ENCODE measurements at regions of chr10 and their contacts with region 1.

Region 1: GRCh38 chr10:73879296-73880173 is 5.2 kb upstream of the CAMK2G start:
- DNase-seq: peak; percentile 97
- ATAC-seq: peak; percentile 93
- H3K4me3 Mint-ChIP-seq: no peak overlapping the region
- H3K27ac Mint-ChIP-seq: peak overlapping the region; percentile 61
- H3K4me1 Mint-ChIP-seq: peaks cover 53% of the 10 kb centered on the region
- H3K27me3 Mint-ChIP-seq: peaks cover 6% of the 10 kb centered on the region

Region 2: GRCh38 chr10:73810735-73811465 is 68.6 kb before region 1 on chr10:
- CTCF ChIA-PET with region 1: interaction called, 22 read pairs
- POLR2A ChIA-PET with region 1: interaction called, 3 read pairs
- DNase-seq: peak; percentile 71
- ATAC-seq: peak; percentile 37
- H3K4me3 Mint-ChIP-seq: peak overlapping the region; percentile 92
- H3K27ac Mint-ChIP-seq: peak overlapping the region; percentile 93
- H3K4me1 Mint-ChIP-seq: peaks cover 48% of the 10 kb centered on the region
- H3K27me3 Mint-ChIP-seq: no peaks in the 10 kb centered on the region

Region 3: GRCh38 chr10:73848821-73849489 is 30.6 kb before region 1 on chr10:
- CTCF ChIA-PET with region 1: interaction called, 431 read pairs
- POLR2A ChIA-PET with region 1: interaction called, 14 read pairs
- DNase-seq: peak; percentile 96
- ATAC-seq: peak; percentile 99
- H3K4me3 Mint-ChIP-seq: peak overlapping the region; percentile 22
- H3K27ac Mint-ChIP-seq: peak overlapping the region; percentile 55
- H3K4me1 Mint-ChIP-seq: peaks cover 24% of the 10 kb centered on the region
- H3K27me3 Mint-ChIP-seq: no peaks in the 10 kb centered on the region

Region 4: GRCh38 chr10:73940634-73941221 is 61.2 kb after region 1 on chr10:
- CTCF ChIA-PET with region 1: interaction called, 408 read pairs
- POLR2A ChIA-PET with region 1: interaction called, 3 read pairs
- DNase-seq: peak; percentile 89
- ATAC-seq: peak; percentile 100
- H3K4me3 Mint-ChIP-seq: peak overlapping the region; percentile 23
- H3K27ac Mint-ChIP-seq: peak overlapping the region; percentile 51
- H3K4me1 Mint-ChIP-seq: peaks cover 21% of the 10 kb centered on the region
- H3K27me3 Mint-ChIP-seq: peaks cover 18% of the 10 kb centered on the region

Region 5: GRCh38 chr10:74058658-74059057 is 179.1 kb after region 1 on chr10:
- CTCF ChIA-PET with region 1: interaction called, 11 read pairs
- POLR2A ChIA-PET with region 1: no interaction called
- DNase-seq: peak; percentile 42
- ATAC-seq: peak; percentile 43
- H3K4me3 Mint-ChIP-seq: no peak overlapping the region
- H3K27ac Mint-ChIP-seq: peak overlapping the region; percentile 51
- H3K4me1 Mint-ChIP-seq: peaks cover 42% of the 10 kb centered on the region
- H3K27me3 Mint-ChIP-seq: no peaks in the 10 kb centered on the region